Breast epithelium (tissue), 4 donors: ENCODE measurements at regions of chr20 and their contacts with region 1.

Region 1: GRCh38 chr20:63973636-63974402 is 4.1 kb upstream of the ZNF512B start:
- DNase-seq: peak; percentile 76 to 91
- H3K4me3 ChIP-seq: peak overlapping the region; percentile 15 to 60 (median 42)
- H3K27ac ChIP-seq: peak overlapping the region; percentile 54 to 58
- H3K4me1 ChIP-seq: peaks cover 0 to 8% of the 10 kb centered on the region in 2 donors
- H3K27me3 ChIP-seq: no peaks in the 10 kb centered on the region
- CTCF ChIP-seq: peak; percentile 87 to 97 (median 97)
- POLR2A ChIP-seq: no peak

Region 2: DNA sequence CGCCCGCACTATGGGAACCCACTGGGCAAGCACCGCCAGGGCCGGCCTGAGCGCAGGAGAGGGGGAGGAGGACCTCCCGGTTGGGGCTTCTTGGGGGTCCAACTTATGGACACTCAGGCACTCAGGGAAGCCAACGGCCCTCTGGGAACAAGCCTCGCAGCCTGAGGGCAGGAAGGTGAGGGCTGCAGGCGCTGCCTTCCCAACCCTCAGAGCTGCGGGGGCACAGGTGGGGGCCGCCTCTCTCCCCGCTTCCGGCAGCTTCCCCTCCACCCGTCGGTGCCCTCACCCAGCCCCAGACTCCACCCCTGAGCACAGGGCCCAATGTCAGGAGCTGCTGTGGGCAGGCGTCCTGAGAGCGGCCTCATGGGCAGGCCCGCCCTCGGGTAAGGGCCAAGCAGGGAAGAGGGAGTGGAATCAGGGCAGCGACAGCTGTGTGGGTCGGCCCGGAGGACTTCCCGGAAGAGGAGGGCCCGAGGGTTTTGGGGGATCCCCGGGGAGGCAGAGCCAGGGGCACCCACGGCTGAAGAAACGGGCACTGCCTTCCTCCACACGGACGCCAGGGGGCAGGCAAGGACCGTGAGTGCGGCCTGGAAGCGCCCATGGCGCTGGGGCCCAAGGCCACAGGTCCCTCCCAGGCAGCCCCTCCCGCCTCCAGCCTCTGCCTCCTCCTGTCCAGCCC is 436.2 kb before region 1 on chr20:
- intact Hi-C with region 1: loop called (anchors 5 kb)
- DNase-seq: peak; percentile 82 to 89
- H3K4me3 ChIP-seq: peak overlapping the region; percentile 17 to 53 (median 37)
- H3K27ac ChIP-seq: peak overlapping the region; percentile 84 to 85
- H3K4me1 ChIP-seq: peaks cover 10 to 17% of the 10 kb centered on the region in 2 donors
- H3K27me3 ChIP-seq: peaks cover 4 to 10% of the 10 kb centered on the region in 2 donors
- CTCF ChIP-seq: peak; percentile 89 to 98 (median 98)
- POLR2A ChIP-seq: no peak

Region 3: DNA sequence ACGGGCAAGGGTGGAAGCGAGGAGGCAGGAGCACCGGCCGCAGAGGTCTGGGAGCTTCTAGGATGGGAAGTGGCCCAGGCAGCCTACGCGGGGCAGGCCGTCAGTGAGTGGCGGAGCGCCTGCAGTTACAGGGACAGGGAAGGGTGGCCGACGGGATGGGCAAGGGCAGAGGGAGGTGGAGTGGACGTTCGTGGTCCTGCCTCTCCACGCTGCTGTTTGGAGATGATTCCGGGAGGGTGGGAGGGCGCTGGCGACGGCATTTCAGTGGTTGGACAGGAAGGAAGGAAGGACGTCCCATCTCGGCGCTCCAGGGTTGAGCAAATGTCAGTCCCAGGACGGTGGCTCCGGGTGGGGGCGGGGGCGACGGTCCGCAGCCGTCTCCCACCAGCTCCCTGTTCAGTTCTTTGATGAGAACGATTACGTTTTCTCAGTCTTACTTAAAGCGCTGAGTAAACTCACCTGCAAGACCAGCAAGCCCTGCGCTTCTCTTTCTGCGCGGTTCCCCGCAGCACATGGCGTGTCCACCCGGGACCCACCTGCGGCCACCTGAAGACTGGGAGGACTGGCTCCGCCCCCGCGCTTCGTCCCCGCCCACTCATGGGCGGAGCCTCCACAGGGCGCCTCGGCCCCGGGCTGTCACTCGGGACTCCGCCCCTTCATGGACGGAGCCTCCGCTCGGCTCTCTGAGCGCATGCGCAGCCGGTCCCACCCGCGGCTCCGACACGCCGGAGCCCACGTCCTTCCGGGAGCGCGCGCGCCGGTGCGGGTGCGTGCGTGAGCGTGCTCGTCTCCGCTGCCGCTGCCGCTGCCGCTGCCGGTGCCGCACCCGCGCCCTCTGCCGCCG is 79.2 kb before region 1 on chr20 and contains the start of gene DNAJC5:
- intact Hi-C with region 1: loop called (anchors 10 kb)
- DNase-seq: peak; percentile 90 to 94
- H3K4me3 ChIP-seq: peak within 1 kb of the TSS; percentile 65 to 85 (median 66)
- H3K27ac ChIP-seq: peak within 1 kb of the TSS; percentile 76 to 91
- H3K4me1 ChIP-seq: peaks cover 7 to 18% of the 10 kb centered on the region in 2 donors
- H3K27me3 ChIP-seq: no peaks in the 10 kb centered on the region
- CTCF ChIP-seq: no peak
- POLR2A ChIP-seq: no peak
- total RNA-seq, gene DNAJC5: 31.1 to 37.9 (median 37.0) TPM